Sigmoid colon (tissue), 7 donors: ENCODE measurements at regions of chr11 and their contacts with region 1.

Region 1: GRCh38 chr11:133134314-133135173 is 397.8 kb downstream of the OPCML start:
- DNase-seq: peak; percentile 64
- H3K4me3 ChIP-seq: no peak overlapping the region
- H3K27ac ChIP-seq: no peak overlapping the region
- H3K4me1 ChIP-seq: no peaks in the 10 kb centered on the region
- H3K27me3 ChIP-seq: peaks cover 0 to 30% (median 0%) of the 10 kb centered on the region in 3 donors
- CTCF ChIP-seq: peak; percentile 62 to 82 (median 70)
- EP300 ChIP-seq: no peak
- POLR2A ChIP-seq: no peak

Region 2: GRCh38 chr11:133545199-133545803 is 410.8 kb after region 1 on chr11:
- intact Hi-C with region 1: loop called (anchors 10 kb)
- DNase-seq: no peak
- H3K4me3 ChIP-seq: no peak overlapping the region
- H3K27ac ChIP-seq: no peak overlapping the region
- H3K4me1 ChIP-seq: peaks cover 0 to 16% (median 7%) of the 10 kb centered on the region in 4 donors
- H3K27me3 ChIP-seq: peaks cover 0 to 19% (median 0%) of the 10 kb centered on the region in 3 donors
- CTCF ChIP-seq: no peak
- EP300 ChIP-seq: no peak
- POLR2A ChIP-seq: no peak

Region 3: DNA sequence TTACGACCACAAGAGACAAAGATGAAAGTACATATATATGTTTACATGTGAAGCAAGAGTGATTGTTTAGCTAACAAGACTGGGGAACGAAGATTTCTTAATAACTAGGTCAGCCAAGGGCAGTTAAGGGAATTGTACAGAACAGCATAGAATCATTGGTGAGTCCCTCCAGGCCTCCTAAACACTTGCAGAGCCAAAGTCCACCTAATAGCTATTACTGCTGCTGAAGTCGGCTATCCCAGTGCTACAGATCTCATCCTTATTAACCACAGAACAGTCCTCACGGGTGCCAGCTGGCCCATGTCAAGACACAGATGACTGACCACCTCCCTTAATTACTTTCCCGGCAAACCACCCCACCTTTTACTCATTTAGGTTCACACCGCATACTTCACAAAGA is 466.2 kb after region 1 on chr11:
- intact Hi-C with region 1: loop called (anchors 10 kb)
- DNase-seq: no peak
- H3K4me3 ChIP-seq: no peak overlapping the region
- H3K27ac ChIP-seq: no peak overlapping the region
- H3K4me1 ChIP-seq: no peaks in the 10 kb centered on the region
- H3K27me3 ChIP-seq: no peaks in the 10 kb centered on the region
- CTCF ChIP-seq: no peak
- EP300 ChIP-seq: no peak
- POLR2A ChIP-seq: no peak

Region 4: DNA sequence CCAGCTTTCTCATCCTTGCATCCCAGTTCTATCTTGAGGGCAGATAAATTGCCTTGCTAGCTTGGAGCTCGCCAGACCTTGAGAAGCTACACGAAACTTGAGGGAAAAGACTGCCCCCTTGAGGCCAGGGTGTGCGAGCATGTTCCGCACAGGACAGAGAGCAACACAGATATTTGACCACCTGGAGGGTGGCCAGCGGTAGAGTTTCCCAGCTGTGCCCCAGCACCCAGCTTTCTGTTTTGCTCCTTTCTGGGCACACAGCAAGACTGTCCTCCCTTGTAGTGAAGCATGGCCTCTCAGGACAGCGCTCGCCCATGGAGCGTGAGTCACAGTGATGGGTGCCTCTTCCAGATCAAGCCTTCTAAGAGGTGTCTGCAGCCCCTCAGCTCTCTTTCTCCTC is 687.2 kb after region 1 on chr11:
- intact Hi-C with region 1: loop called (anchors 5 kb)
- DNase-seq: no peak
- H3K4me3 ChIP-seq: no peak overlapping the region
- H3K27ac ChIP-seq: no peak overlapping the region
- H3K4me1 ChIP-seq: no peaks in the 10 kb centered on the region
- H3K27me3 ChIP-seq: peaks cover 0 to 7% (median 0%) of the 10 kb centered on the region in 3 donors
- CTCF ChIP-seq: peak in 2 of 4 experiments; percentile 21 to 49
- EP300 ChIP-seq: no peak
- POLR2A ChIP-seq: no peak

Region 5: GRCh38 chr11:133834682-133835592 is 700.4 kb after region 1 on chr11:
- intact Hi-C with region 1: loop called (anchors 1 kb)
- DNase-seq: no peak
- H3K4me3 ChIP-seq: no peak overlapping the region
- H3K27ac ChIP-seq: no peak overlapping the region
- H3K4me1 ChIP-seq: peaks cover 0 to 4% (median 0%) of the 10 kb centered on the region in 4 donors
- H3K27me3 ChIP-seq: peaks cover 0 to 19% (median 0%) of the 10 kb centered on the region in 3 donors
- CTCF ChIP-seq: peak; percentile 28 to 60 (median 48)
- EP300 ChIP-seq: no peak
- POLR2A ChIP-seq: no peak